Dorsolateral prefrontal cortex (tissue), 120 donors: ENCODE measurements at regions of chr19 and their contacts with region 1.

Region 1: DNA sequence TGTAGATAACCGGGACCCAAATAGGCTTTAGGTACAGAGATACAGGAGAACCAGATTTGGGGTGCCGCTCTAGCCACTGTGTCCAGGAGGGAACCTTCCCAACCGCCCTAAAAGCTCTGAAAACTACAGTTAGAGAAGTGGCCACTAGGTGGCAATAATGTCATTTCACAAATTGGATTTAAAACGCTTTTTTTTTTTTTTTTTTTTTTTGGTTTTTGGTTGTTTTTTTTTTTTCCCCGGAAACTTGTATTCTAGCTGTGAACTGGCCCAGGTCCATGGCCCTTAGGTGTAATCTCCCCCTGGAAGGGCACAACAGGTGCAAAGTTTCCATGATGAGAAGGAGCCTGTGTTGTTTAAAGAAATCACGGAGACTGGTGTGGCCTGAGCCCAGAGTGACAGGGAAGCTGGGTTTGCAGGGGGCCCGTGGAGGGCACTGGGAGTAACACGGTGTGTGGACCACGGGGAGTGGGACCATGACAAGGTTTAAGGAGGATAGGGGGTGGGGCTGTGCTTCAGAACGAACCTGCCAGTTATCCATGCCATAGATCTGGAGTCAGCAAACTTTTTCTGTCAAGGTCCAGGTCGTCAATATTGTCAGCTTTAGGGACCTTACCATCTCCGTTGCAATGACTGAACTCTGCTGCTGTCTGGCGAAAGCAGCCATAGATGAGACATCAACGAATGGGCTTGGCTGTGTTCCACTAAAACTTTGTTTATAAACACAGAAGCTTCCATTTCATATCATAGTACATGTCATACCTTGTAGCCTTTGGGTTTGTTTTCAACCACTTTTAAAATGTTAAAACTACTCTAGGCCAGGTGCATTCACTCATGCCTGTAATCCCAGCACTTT is 10.1 kb downstream of the OR1I1 start:
- DNase-seq: no peak
- H3K4me3 ChIP-seq: peak overlapping the region in 2 of 59 donors; percentile 5 to 33
- H3K27ac ChIP-seq: no peak overlapping the region
- H3K27me3 ChIP-seq: peaks cover 0 to 13% (median 0%) of the 10 kb centered on the region in 45 donors
- CTCF ChIP-seq: peak; percentile 53 to 89 (median 77)

Region 2: GRCh38 chr19:15149737-15150136 is 57.6 kb after region 1 on chr19:
- intact Hi-C with region 1: loop called (anchors 1 to 2 kb)
- DNase-seq: no peak
- H3K4me3 ChIP-seq: no peak overlapping the region
- H3K27ac ChIP-seq: no peak overlapping the region
- H3K27me3 ChIP-seq: peaks cover 0 to 5% (median 0%) of the 10 kb centered on the region in 45 donors
- CTCF ChIP-seq: no peak

Region 3: DNA sequence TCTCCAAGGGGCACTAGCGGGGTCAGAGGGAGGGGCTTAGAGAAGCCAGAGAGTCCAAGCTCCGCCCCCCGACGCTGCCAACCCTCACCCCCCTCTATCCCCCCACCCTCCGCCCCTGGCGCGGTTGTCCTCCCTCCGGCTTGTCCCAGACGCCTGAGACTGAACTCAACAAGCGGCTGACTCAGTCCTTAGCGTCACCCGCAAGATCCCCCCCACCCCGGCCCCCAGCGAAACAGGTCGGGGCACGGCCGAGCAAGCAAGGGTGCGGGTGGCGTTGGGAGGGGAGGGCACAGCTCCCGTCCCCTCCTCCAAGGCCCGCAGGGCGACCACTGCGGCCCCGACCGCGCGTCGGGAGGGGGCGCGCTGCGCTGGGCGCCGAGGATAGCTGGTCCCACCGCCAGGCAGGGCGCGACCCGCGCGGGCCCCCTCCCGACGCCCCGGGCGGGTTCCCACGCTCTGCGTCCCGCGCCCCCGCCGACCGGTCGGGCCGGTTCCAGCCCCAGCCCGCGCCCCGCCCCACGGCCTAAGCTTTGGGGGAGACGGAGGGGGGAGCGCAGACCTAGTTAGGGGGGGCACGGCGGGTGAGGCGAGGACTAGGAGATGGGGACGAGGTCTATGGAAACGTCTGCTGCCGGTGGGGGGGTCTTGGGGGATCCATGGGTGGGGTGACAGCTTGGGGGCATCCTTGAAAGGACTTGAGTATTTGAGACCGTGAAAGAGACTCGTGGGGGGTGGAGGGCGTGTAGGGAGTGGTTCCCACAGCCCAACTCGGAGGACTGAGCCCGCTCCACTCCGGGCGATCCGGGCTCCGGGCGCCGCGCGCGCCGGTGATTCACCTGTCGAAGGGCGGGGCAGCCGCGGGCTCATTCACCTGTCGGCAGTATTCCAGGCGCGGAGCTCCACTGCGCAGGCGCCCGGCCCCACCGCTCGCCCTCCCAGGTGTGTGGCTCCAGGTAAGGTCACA is 103.5 kb after region 1 on chr19:
- intact Hi-C with region 1: no loop called
- DNase-seq: no peak
- H3K4me3 ChIP-seq: peak overlapping the region in 41 of 59 donors; percentile 5 to 57 (median 38)
- H3K27ac ChIP-seq: peak overlapping the region in 16 of 59 donors; percentile 8 to 69 (median 30)
- H3K27me3 ChIP-seq: peaks cover 0 to 66% (median 29%) of the 10 kb centered on the region in 45 donors
- CTCF ChIP-seq: peak in 1 of 56 donors; percentile 20

Region 4: DNA sequence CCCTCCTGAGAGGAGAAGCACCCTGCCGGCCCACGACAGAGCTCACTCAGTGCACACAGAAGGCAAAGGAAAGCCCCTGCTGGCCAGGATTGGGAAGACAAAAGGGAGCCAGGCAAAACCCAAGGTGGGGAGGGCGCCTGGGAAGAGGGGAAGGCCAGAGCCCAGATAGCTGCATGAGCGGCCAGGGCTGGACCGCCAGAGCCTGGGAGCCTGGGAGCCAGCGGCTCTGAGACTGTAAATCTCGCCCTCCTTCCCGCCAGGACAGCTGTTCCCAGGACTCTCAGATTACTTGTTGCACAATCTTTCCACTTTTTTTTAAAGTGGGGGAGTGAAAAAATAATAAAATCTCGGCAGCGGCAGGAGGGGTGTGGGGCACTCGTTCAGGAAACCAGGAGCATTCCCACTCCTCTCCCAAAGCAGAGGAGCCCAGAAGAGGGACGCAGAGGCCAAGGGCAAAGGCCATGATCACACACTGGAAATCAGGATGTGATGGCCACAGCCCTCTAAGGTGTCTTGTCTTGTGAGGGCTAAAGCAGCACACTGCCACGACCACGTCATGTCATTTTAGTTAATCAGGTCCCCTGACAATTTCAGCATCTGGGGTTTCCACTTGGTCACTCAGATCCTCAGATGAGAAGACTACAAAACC is 159.7 kb after region 1 on chr19:
- intact Hi-C with region 1: loop called in 1 of 2 experiments (anchors 5 kb)
- DNase-seq: peak in 2 of 10 donors; percentile 23 to 36
- H3K4me3 ChIP-seq: peak overlapping the region in 9 of 59 donors; percentile 5 to 34 (median 14)
- H3K27ac ChIP-seq: peak overlapping the region in 57 of 59 donors; percentile 8 to 90 (median 72)
- H3K27me3 ChIP-seq: no peaks in the 10 kb centered on the region
- CTCF ChIP-seq: peak in 24 of 56 donors; percentile 12 to 47 (median 26)